Panc1 (cell line): ENCODE measurements at regions of chr17 and their contacts with region 1.

Region 1: DNA sequence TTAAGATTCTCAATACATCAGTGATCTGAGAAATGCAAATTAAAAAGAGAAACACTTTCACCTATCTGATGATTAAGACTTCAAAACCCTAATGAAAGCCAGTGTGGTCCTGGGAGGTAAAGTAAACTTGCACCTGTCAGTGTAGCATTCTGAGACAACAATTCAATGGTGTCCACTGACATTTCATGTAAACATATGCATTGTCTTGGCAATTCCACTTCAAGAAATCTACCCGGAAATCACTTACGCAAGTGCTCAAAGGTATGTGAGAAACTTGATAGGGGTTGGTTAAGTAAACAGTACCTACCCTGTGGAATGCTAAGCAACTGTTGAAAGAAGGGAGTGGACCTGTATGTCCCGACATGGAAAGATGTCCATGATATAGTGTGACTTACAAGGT is 2.1 kb downstream of the ST6GALNAC1 start:
- DNase-seq: no peak
- ATAC-seq: 0 out of 2 replicates have a peak, but pooled peaks have one; percentile 50
- H3K4me3 ChIP-seq: no peak overlapping the region
- H3K27ac ChIP-seq: no peak overlapping the region
- H3K4me1 ChIP-seq: no peaks in the 10 kb centered on the region
- H3K27me3 ChIP-seq: no peaks in the 10 kb centered on the region
- CTCF ChIP-seq: no peak

Region 2: GRCh38 chr17:76791053-76791980 is 149.8 kb after region 1 on chr17:
- CTCF ChIA-PET with region 1: interaction called, 11 read pairs
- POLR2A ChIA-PET with region 1: no interaction called
- in situ Hi-C with region 1: no loop called
- intact Hi-C with region 1: no loop called
- DNase-seq: no peak
- ATAC-seq: no peak; the same call in 1 of the 2 replicates
- H3K4me3 ChIP-seq: no peak overlapping the region
- H3K27ac ChIP-seq: no peak overlapping the region
- H3K4me1 ChIP-seq: peaks cover 6% of the 10 kb centered on the region; the same call in 1 of the 2 replicates
- H3K27me3 ChIP-seq: no peaks in the 10 kb centered on the region
- CTCF ChIP-seq: no peak

Region 3: GRCh38 chr17:76816590-76817135 is 175.2 kb after region 1 on chr17:
- CTCF ChIA-PET with region 1: no interaction called
- POLR2A ChIA-PET with region 1: no interaction called
- in situ Hi-C with region 1: no loop called
- intact Hi-C with region 1: no loop called
- DNase-seq: peak; percentile 24
- ATAC-seq: peak; percentile 87
- H3K4me3 ChIP-seq: no peak overlapping the region
- H3K27ac ChIP-seq: no peak overlapping the region
- H3K4me1 ChIP-seq: no peaks in the 10 kb centered on the region
- H3K27me3 ChIP-seq: no peaks in the 10 kb centered on the region
- CTCF ChIP-seq: peak; percentile 93